ENCODE measurements at regions of chr2 and their contacts with region 1.

Region 1: DNA sequence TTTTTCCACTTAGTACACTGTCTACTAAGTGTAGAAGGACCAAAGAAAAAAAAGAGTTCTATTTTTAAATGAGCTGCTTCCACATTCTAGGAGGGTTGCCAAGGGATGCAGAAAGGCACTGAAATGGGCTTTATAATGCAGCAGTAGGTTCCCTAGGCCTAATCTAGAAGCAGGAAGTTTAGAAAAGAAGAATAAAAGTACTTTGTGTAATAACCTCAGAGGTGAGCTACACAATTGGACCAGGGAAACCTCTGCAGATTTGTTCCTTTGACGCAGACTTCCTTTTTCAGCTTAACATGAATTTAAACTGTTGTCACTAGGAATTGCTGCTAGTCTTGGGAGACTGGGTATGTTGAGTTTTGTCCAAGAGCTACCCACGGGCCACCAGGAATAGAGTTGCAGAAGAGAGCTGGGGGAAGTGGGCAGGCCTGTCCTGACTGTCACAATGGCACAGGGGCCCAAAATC is 34.6 kb upstream of the RAB1A start:
- DNase-seq: no peak
- H3K4me3 Mint-ChIP-seq: no peak overlapping the region
- H3K27ac Mint-ChIP-seq: no peak overlapping the region
- H3K4me1 Mint-ChIP-seq: peaks cover 23% of the 10 kb centered on the region
- H3K27me3 Mint-ChIP-seq: no peaks in the 10 kb centered on the region
- CTCF ChIP-seq: no peak

Region 2: GRCh38 chr2:65081232-65081685 is 83.2 kb before region 1 on chr2:
- CTCF ChIA-PET with region 1: no interaction called
- intact Hi-C with region 1: loop called (anchors 10 kb)
- DNase-seq: no peak
- H3K4me3 Mint-ChIP-seq: no peak overlapping the region
- H3K27ac Mint-ChIP-seq: no peak overlapping the region
- H3K4me1 Mint-ChIP-seq: no peaks in the 10 kb centered on the region
- H3K27me3 Mint-ChIP-seq: no peaks in the 10 kb centered on the region
- CTCF ChIP-seq: no peak

Region 3: GRCh38 chr2:65129826-65130663 is 34.4 kb before region 1 on chr2 and contains the start of gene RAB1A:
- CTCF ChIA-PET with region 1: interaction called, 7 read pairs
- intact Hi-C with region 1: loop called (anchors 5 kb)
- DNase-seq: peak; percentile 98
- H3K4me3 Mint-ChIP-seq: peak within 1 kb of the TSS; percentile 89
- H3K27ac Mint-ChIP-seq: peak within 1 kb of the TSS; percentile 98
- H3K4me1 Mint-ChIP-seq: peaks cover 18% of the 10 kb centered on the region
- H3K27me3 Mint-ChIP-seq: no peaks in the 10 kb centered on the region
- CTCF ChIP-seq: peak; percentile 6
- total RNA-seq, gene RAB1A: 141 and 148 TPM in 2 replicates

Region 4: GRCh38 chr2:65142515-65142914 is 21.9 kb before region 1 on chr2:
- CTCF ChIA-PET with region 1: interaction called, 10 read pairs
- intact Hi-C with region 1: no loop called
- DNase-seq: peak; percentile 45
- H3K4me3 Mint-ChIP-seq: no peak overlapping the region
- H3K27ac Mint-ChIP-seq: no peak overlapping the region
- H3K4me1 Mint-ChIP-seq: peaks cover 8% of the 10 kb centered on the region
- H3K27me3 Mint-ChIP-seq: no peaks in the 10 kb centered on the region
- CTCF ChIP-seq: no peak

Region 5: GRCh38 chr2:65204461-65205210 is 40.2 kb after region 1 on chr2:
- CTCF ChIA-PET with region 1: no interaction called
- intact Hi-C with region 1: no loop called
- DNase-seq: no peak
- H3K4me3 Mint-ChIP-seq: no peak overlapping the region
- H3K27ac Mint-ChIP-seq: no peak overlapping the region
- H3K4me1 Mint-ChIP-seq: no peaks in the 10 kb centered on the region
- H3K27me3 Mint-ChIP-seq: no peaks in the 10 kb centered on the region
- CTCF ChIP-seq: no peak

Region 6: DNA sequence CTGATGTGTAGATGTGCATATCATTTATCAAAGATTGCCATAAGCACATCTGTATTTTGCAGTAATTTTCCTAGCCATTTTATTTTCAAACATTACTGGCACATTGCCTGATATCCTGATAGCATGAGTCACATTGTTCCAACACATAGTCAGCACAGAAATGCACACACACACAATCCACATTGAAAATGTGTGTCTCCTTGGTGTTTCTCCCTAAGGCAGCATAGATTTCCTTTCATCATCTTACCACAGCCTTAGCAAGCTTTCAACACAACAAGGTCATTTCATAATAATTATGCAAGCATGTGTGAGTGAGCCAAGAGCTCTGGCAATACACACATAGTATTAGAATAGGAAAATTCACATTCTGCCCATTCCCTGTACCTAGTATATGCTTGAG is 1025.1 kb after region 1 on chr2:
- CTCF ChIA-PET with region 1: no interaction called
- intact Hi-C with region 1: no loop called
- DNase-seq: no peak
- H3K4me3 Mint-ChIP-seq: no peak overlapping the region
- H3K27ac Mint-ChIP-seq: no peak overlapping the region
- H3K4me1 Mint-ChIP-seq: no peaks in the 10 kb centered on the region
- H3K27me3 Mint-ChIP-seq: peaks cover 8% of the 10 kb centered on the region
- CTCF ChIP-seq: no peak

Measured in Calu3 (cell line).